Activated CD4-positive, alpha-beta T cell treated with anti-CD3 and anti-CD28 coated beads for 36 hours (primary cell): ENCODE measurements at regions of chr6 and their contacts with region 1.

Region 1: GRCh38 chr6:156776840-156777576 is at the start of gene ARID1B:
- DNase-seq: peak; percentile 82
- ATAC-seq: peak; percentile 32
- H3K4me3 Mint-ChIP-seq: peak within 1 kb of the TSS; percentile 85
- H3K27ac Mint-ChIP-seq: peak within 1 kb of the TSS; percentile 98
- H3K4me1 Mint-ChIP-seq: peaks cover 13% of the 10 kb centered on the region
- H3K27me3 Mint-ChIP-seq: no peaks in the 10 kb centered on the region
- total RNA-seq, gene ARID1B: 42.2 to 53.6 TPM

Region 2: DNA sequence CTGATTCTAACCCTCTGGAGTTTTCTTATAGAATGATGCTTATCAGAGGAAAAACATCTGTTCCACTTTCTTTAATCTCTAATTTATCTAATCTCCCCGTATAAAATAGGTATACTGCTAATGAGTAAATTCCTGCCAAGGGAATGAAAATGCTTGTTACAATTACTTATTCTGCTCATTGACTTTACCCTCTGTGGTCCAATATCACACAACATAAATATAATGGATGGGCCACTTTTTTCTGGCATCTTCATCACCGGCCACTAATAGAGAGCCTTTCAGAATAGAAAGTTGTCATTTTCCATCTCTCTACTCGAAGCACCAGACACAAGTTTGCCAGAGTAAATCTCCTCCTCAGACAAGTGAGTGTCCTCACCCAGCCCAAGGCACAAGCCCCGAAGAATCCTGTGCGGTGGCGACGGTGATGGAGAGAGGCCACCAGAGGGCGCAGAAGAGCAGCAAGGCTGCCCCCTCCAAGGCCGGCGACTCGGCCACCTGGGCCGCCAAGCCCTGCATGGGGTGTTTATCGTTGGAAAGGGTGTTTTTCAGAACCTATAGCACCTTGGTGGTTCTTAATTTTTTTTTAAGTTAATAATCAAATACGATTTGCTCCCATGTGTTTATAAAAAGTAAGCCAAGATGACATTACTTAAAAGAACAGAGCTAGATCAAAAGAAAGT is 212.7 kb before region 1 on chr6:
- CTCF ChIA-PET with region 1: no interaction called
- POLR2A ChIA-PET with region 1: no interaction called
- intact Hi-C with region 1: loop called (anchors 2 to 10 kb)
- DNase-seq: peak; percentile 89
- ATAC-seq: peak; percentile 98
- H3K4me3 Mint-ChIP-seq: no peak overlapping the region
- H3K27ac Mint-ChIP-seq: no peak overlapping the region
- H3K4me1 Mint-ChIP-seq: peaks cover 7% of the 10 kb centered on the region
- H3K27me3 Mint-ChIP-seq: peaks cover 3% of the 10 kb centered on the region

Region 3: DNA sequence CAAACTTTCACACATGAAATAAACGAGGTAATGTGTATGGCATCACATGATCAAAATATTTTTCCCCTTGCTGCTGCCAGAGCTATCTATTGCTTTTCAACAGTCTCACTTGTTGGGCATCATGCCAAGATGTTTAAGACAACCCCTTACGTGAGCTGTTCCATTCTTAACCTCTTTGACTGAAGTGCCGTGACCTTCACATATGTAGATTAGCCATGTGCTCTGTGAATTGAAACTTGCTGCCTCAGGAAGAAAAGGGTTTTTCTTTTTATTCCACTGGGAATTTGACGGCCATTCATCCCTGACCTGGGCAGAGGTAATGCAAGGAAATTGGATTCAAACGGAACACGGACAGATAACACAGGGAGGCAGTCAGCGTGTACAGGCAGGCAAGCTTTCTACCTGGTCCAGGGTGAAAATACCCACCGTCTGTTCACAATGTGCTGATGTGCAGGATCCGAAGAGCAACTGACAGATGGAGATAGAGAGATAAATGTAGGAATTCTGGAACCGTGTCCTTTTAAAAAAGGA is 14.4 kb after region 1 on chr6:
- CTCF ChIA-PET with region 1: interaction called, 8 read pairs
- POLR2A ChIA-PET with region 1: interaction called, 3 read pairs
- intact Hi-C with region 1: loop called in 1 of 2 experiments (anchors 1 kb)
- DNase-seq: peak; percentile 46
- ATAC-seq: peak; percentile 85
- H3K4me3 Mint-ChIP-seq: peak overlapping the region; percentile 47
- H3K27ac Mint-ChIP-seq: peak overlapping the region; percentile 92
- H3K4me1 Mint-ChIP-seq: peaks cover 91% of the 10 kb centered on the region
- H3K27me3 Mint-ChIP-seq: no peaks in the 10 kb centered on the region

Region 4: GRCh38 chr6:156933201-156934068 is 156.4 kb after region 1 on chr6:
- CTCF ChIA-PET with region 1: no interaction called
- POLR2A ChIA-PET with region 1: interaction called, 3 read pairs
- intact Hi-C with region 1: loop called (anchors 5 kb)
- DNase-seq: no peak
- ATAC-seq: no peak
- H3K4me3 Mint-ChIP-seq: no peak overlapping the region
- H3K27ac Mint-ChIP-seq: peak overlapping the region; percentile 2
- H3K4me1 Mint-ChIP-seq: peaks cover 77% of the 10 kb centered on the region
- H3K27me3 Mint-ChIP-seq: no peaks in the 10 kb centered on the region

Region 5: DNA sequence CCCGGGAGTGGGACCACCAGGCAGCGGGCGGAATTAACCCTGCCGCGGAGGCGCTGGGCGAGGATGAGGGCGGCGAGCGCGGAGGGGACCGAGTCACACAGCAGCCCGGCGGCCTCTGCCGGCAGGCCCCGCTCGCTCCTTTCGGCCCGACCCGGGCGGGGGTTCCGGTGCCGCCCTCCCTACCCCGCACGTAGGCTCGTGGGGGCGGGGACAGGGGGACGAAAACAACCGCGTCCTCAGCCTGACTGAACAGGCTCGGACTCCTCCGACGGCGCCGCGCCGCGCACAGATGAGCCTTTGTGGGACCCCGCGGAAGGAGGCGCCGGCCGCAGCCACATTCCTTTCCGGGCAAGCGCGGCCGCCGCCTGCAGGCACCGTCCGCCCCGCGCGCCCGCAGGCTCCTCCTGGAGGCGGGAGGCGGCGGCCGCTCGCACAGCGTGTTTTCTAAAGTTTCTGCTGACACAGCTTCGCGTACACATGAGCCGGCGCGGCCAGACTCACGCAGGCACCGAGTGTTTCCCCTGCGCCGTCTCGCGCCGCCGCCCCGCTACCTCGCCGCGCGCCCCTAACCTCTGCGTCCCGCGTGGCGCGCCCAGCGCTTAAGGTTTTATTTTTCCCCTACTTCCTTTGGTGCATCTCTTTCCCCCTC is 244.5 kb after region 1 on chr6:
- CTCF ChIA-PET with region 1: interaction called, 4 read pairs
- POLR2A ChIA-PET with region 1: interaction called, 4 read pairs
- intact Hi-C with region 1: loop called (anchors 1 kb)
- DNase-seq: peak; percentile 94
- ATAC-seq: peak; percentile 81
- H3K4me3 Mint-ChIP-seq: peak overlapping the region; percentile 88
- H3K27ac Mint-ChIP-seq: peak overlapping the region; percentile 100
- H3K4me1 Mint-ChIP-seq: peaks cover 53% of the 10 kb centered on the region
- H3K27me3 Mint-ChIP-seq: no peaks in the 10 kb centered on the region

Region 6: GRCh38 chr6:157184202-157185020 is 407.4 kb after region 1 on chr6:
- CTCF ChIA-PET with region 1: interaction called, 3 read pairs
- POLR2A ChIA-PET with region 1: no interaction called
- intact Hi-C with region 1: loop called in 1 of 2 experiments (anchors 5 kb)
- DNase-seq: peak; percentile 76
- ATAC-seq: peak; percentile 83
- H3K4me3 Mint-ChIP-seq: no peak overlapping the region
- H3K27ac Mint-ChIP-seq: peak overlapping the region; percentile 58
- H3K4me1 Mint-ChIP-seq: peaks cover 11% of the 10 kb centered on the region
- H3K27me3 Mint-ChIP-seq: no peaks in the 10 kb centered on the region